BJ (cell line): ENCODE measurements at regions of chr17 and their contacts with region 1.

Region 1: DNA sequence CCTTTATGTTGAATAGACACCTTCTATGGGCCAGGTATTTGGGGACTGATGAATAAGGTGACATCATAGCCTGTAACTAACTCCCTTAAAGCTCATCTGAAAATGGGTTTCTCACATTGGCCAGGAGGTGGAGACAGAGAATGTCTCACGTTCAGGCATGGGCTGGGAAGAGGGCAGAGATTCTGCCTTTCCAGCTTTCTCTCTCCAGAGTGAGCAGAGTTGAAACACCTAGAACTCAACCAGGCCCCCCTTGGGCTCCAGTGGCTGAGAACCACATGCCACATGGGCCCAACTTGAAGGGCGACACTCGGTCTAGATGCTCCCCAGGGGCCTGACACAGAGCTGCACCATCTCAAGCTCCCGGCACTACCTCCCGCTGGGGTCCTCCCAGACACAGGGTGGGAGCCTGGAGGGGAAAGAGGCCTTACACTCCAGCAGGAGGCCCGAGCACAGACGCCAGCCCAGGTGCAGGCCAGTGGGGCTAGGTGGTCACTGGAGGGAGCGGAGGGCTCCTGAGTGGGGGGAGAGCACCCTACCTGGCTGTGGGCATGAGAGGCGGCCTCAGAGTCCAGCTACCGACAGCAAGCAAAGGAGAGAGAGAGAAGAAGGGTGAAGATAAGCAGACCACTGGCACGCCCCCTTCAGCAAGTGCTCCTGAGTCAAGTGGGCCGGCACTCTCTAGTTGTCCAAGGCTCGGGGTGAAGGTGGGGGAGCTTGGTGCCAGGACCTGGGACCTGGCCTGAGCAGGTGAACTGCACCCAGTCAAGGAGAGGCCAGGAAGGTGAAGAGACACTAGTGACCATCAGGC is 55.9 kb downstream of the MYO18A start:
- DNase-seq: no peak
- H3K4me3 ChIP-seq: no peak overlapping the region
- H3K27me3 ChIP-seq: no peaks in the 10 kb centered on the region
- CTCF ChIP-seq: peak; percentile 79

Region 2: GRCh38 chr17:29212681-29213121 is 88.4 kb after region 1 on chr17:
- CTCF ChIA-PET with region 1: interaction called, 15 read pairs
- POLR2A ChIA-PET with region 1: no interaction called
- DNase-seq: peak; percentile 11
- H3K4me3 ChIP-seq: no peak overlapping the region
- H3K27me3 ChIP-seq: no peaks in the 10 kb centered on the region
- CTCF ChIP-seq: no peak